OCI-LY7 (cell line): ENCODE measurements at regions of chr14 and their contacts with region 1.

Region 1: GRCh38 chr14:59377991-59378601 is 87.1 kb downstream of the GPR135 start:
- DNase-seq: no peak
- H3K4me3 ChIP-seq: no peak overlapping the region
- H3K27ac ChIP-seq: no peak overlapping the region
- H3K4me1 ChIP-seq: no peaks in the 10 kb centered on the region
- CTCF ChIP-seq: no peak

Region 2: GRCh38 chr14:59262717-59263454 is 115.2 kb before region 1 on chr14:
- CTCF ChIA-PET with region 1: no interaction called
- POLR2A ChIA-PET with region 1: no interaction called
- intact Hi-C with region 1: no loop called
- DNase-seq: no peak
- H3K4me3 ChIP-seq: no peak overlapping the region
- H3K27ac ChIP-seq: no peak overlapping the region
- H3K4me1 ChIP-seq: peaks cover 6% of the 10 kb centered on the region
- CTCF ChIP-seq: peak; percentile 42; the same call in 1 of the 2 replicates

Region 3: GRCh38 chr14:59422069-59422881 is 44.2 kb after region 1 on chr14:
- CTCF ChIA-PET with region 1: no interaction called
- POLR2A ChIA-PET with region 1: interaction called, 3 read pairs
- intact Hi-C with region 1: loop called (anchors 5 kb)
- DNase-seq: peak; percentile 64
- H3K4me3 ChIP-seq: no peak overlapping the region
- H3K27ac ChIP-seq: peak overlapping the region; percentile 16
- H3K4me1 ChIP-seq: peaks cover 26% of the 10 kb centered on the region
- CTCF ChIP-seq: peak; percentile 79